Cardiac septum (tissue), 1 donor: ENCODE measurements at regions of chr6 and their contacts with region 1.

Region 1: DNA sequence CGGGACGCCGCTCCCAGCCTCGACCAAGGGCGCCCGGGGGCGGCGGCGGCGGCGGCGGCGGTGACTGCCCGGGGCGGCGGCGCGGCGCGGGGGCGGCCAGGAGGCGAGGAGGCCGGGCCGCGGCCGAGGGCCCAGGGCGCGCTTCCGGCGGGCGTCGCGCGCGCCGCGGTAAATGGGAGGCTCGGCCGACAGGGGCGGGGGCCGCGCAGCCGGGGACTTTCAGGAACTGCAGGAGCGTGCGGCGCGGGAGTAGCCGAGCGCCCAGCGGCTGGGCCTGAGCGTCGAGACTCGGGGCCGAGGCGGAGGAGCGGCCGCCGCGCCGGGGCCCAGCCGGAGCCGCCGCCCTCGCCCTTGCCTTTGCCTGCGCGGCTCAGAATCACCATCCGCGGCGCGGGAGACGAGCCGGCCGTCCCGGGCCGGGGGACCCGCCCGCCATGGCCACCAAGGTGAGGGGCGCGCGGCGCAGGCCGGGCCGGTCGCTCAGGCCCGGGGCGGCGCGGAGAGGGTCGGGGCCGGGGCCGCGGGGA is at the start of gene SNX9:
- DNase-seq: peak; percentile 87
- total RNA-seq, gene SNX9: 34.2 TPM

Region 2: DNA sequence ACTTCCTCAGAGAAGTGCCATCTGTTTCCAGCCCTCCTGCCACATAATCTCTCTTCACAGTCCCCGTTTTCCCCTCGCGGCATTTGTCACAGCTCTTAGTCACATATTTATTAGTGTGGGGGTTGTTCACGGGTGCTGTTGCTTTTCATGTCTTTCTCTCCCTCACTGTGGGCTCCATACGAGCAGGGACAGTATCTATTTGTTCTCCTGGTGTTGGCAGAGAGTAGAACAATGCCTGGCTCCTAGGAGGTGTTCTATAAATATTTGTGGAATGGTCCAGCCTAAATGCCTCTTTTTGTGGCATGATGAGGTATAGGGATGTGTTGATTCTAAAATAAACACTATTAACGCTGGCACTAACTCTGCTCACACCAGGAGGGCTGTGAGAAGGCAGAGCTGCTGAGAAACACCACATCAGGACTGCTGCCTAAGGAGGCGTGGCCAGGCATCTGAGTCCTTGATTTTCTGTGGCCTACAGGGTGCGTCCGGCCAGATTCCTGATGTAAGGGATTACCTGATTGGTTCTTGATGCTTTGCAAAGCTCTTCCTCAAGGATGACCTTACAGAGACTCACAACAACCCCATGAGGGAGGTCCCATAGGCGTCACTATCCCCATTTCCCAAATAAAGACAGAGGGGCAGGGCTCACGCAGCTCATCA is 1265.7 kb before region 1 on chr6:
- intact Hi-C with region 1: no loop called
- DNase-seq: no peak

Region 3: GRCh38 chr6:157764178-157765033 is 58.7 kb before region 1 on chr6:
- intact Hi-C with region 1: loop called (anchors 5 kb)
- DNase-seq: peak; percentile 92

Region 4: DNA sequence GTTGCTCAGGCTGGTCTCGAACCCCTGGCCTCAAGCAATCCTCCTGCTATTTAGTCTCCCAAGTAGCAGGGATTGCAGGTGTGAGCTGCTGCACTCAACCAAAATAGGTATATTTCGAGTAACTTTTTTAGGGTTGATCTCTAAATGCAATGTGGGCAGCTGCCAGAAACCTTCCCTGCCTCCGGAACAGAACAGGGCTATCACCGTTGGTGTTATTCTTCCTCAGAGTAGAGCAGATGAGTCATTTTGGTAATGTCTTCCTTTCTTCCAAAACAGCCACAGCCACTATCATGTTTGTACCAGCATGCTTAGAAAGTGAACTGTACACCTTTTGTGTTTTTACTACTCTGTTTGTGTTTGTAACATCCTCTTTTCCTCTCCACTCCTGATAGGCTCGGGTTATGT is 44.1 kb after region 1 on chr6:
- intact Hi-C with region 1: loop called (anchors 5 kb)
- DNase-seq: no peak